HCT116 (cell line): ENCODE measurements at regions of chr14 and their contacts with region 1.

Region 1: GRCh38 chr14:69107407-69108003 is 45.4 kb downstream of the DCAF5 start:
- DNase-seq: peak; percentile 60
- ATAC-seq: peak; percentile 70
- H3K4me3 ChIP-seq: no peak overlapping the region
- H3K27ac ChIP-seq: no peak overlapping the region
- H3K4me1 ChIP-seq: peaks cover 4 to 9% of the 10 kb centered on the region in 2 experiments; a peak in 3 of 4 replicates
- H3K27me3 ChIP-seq: no peaks in the 10 kb centered on the region
- CTCF ChIP-seq: peak; percentile 68 to 78 (median 75)
- POLR2A ChIP-seq: no peak
- RAD21 ChIP-seq: peak; percentile 89

Region 2: GRCh38 chr14:67919259-67920032 is 1188.1 kb before region 1 on chr14:
- CTCF ChIA-PET with region 1: no interaction called
- POLR2A ChIA-PET with region 1: no interaction called
- RAD21 ChIA-PET with region 1: no interaction called
- intact Hi-C with region 1: loop called (anchors 10 kb)
- DNase-seq: no peak
- ATAC-seq: no peak
- H3K4me3 ChIP-seq: no peak overlapping the region
- H3K27ac ChIP-seq: no peak overlapping the region
- H3K4me1 ChIP-seq: no peaks in the 10 kb centered on the region
- H3K27me3 ChIP-seq: no peaks in the 10 kb centered on the region
- CTCF ChIP-seq: no peak
- POLR2A ChIP-seq: no peak
- RAD21 ChIP-seq: no peak

Region 3: GRCh38 chr14:68862954-68863594 is 244.4 kb before region 1 on chr14:
- CTCF ChIA-PET with region 1: interaction called, 25 read pairs
- POLR2A ChIA-PET with region 1: no interaction called
- RAD21 ChIA-PET with region 1: interaction called in 1 of 2 experiments, 3 read pairs
- intact Hi-C with region 1: loop called (anchors 1 kb)
- DNase-seq: peak; percentile 67
- ATAC-seq: peak; percentile 96
- H3K4me3 ChIP-seq: no peak overlapping the region
- H3K27ac ChIP-seq: no peak overlapping the region
- H3K4me1 ChIP-seq: peaks cover 0 to 4% of the 10 kb centered on the region in 2 experiments; a peak in 2 of 4 replicates
- H3K27me3 ChIP-seq: no peaks in the 10 kb centered on the region
- CTCF ChIP-seq: peak; percentile 78 to 86 (median 85)
- POLR2A ChIP-seq: no peak
- RAD21 ChIP-seq: peak; percentile 93

Region 4: GRCh38 chr14:68874746-68875155 is 232.8 kb before region 1 on chr14:
- CTCF ChIA-PET with region 1: interaction called, 10 read pairs
- POLR2A ChIA-PET with region 1: no interaction called
- RAD21 ChIA-PET with region 1: no interaction called
- intact Hi-C with region 1: no loop called
- DNase-seq: peak; percentile 57
- ATAC-seq: peak; percentile 91
- H3K4me3 ChIP-seq: peak overlapping the region; percentile 62 to 64
- H3K27ac ChIP-seq: peak overlapping the region; percentile 67
- H3K4me1 ChIP-seq: peaks cover 0 to 10% of the 10 kb centered on the region in 2 experiments; a peak in 2 of 4 replicates
- H3K27me3 ChIP-seq: no peaks in the 10 kb centered on the region
- CTCF ChIP-seq: 0 out of 6 replicates have a peak, but pooled peaks of 1 of the 3 experiments have one; percentile 5
- POLR2A ChIP-seq: peak; percentile 42
- RAD21 ChIP-seq: 0 out of 2 replicates have a peak, but pooled peaks have one; percentile 16

Region 5: DNA sequence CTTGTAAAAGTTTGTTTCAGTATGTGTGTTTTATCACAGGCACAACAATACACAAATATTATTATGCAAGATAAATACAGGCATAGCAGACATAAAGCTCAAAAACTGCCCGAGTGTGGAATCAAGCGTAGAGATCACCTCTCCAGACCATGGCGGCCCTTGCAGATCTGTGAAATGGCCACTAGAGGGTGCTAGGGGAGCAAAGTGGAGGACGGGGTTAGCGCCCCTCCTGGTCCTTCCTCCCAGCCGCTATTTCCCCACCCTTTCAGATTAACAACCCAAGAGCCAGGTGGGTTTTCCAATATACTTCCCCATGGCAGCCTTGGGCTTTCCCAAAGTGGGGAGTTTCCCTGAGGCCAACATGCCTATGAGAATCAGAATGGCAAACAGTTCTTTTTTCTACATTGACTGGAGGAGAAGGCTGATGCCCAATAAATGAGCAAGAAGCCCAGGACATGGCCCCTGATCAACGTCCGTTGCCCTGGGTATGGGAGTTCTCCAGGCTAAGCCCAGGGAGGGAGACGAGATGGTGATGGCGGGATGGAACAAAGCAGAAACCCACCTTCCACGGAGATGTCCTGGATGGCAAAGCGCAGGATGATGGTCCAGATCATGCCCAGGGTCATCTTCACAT is 195.8 kb before region 1 on chr14:
- CTCF ChIA-PET with region 1: interaction called, 24 read pairs
- POLR2A ChIA-PET with region 1: no interaction called
- RAD21 ChIA-PET with region 1: interaction called, 3 to 4 read pairs
- intact Hi-C with region 1: loop called (anchors 1 kb)
- DNase-seq: peak; percentile 54
- ATAC-seq: peak; percentile 98
- H3K4me3 ChIP-seq: no peak overlapping the region
- H3K27ac ChIP-seq: no peak overlapping the region
- H3K4me1 ChIP-seq: no peaks in the 10 kb centered on the region
- H3K27me3 ChIP-seq: no peaks in the 10 kb centered on the region
- CTCF ChIP-seq: peak; percentile 98 to 99 (median 99)
- POLR2A ChIP-seq: no peak
- RAD21 ChIP-seq: peak; percentile 92

Region 6: DNA sequence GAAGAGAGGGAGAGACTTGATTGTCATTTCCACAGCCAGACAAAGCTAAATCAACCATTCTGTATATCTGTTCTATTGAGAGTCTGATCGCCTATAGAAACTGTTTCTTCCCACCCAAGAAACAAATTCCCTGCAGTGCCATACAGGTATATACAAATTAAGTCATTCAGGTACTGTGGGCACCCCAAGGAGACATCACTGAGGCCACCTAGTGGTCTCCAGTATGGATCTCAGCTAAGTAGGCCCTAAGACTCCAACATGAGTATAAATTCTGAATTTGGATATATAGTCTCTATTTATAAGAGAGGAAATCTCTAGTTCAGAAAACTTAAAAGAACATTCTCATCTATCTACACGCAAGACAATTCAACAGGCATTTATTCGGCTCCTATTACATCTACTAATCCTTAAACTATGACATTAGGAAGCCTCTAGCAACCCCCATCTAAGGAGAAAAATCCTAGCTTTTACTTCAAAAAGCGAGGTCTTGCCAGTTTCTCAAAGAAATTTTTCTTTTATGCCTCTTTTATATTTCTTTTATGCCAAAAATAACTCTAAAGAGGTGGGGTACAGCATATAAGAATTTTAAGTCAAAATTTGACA is 17.2 kb before region 1 on chr14:
- CTCF ChIA-PET with region 1: interaction called, 15 read pairs
- POLR2A ChIA-PET with region 1: no interaction called
- RAD21 ChIA-PET with region 1: no interaction called
- intact Hi-C with region 1: no loop called
- DNase-seq: peak; percentile 45
- ATAC-seq: peak; percentile 98
- H3K4me3 ChIP-seq: no peak overlapping the region
- H3K27ac ChIP-seq: no peak overlapping the region
- H3K4me1 ChIP-seq: no peaks in the 10 kb centered on the region
- H3K27me3 ChIP-seq: no peaks in the 10 kb centered on the region
- CTCF ChIP-seq: peak; percentile 77 to 89 (median 86); a peak in 5 of 6 replicates
- POLR2A ChIP-seq: no peak
- RAD21 ChIP-seq: peak; percentile 77